CD8-positive, alpha-beta T cell (primary cell): ENCODE measurements at regions of chr5 and their contacts with region 1.

Region 1: GRCh38 chr5:38441453-38442246 is 114.8 kb downstream of the LIFR start:
- DNase-seq: peak; percentile 64 to 87 (median 81)
- ATAC-seq: peak; percentile 96
- H3K4me3 ChIP-seq: no peak overlapping the region
- H3K4me3 Mint-ChIP-seq: no peak overlapping the region
- H3K27ac ChIP-seq: no peak overlapping the region
- H3K27ac Mint-ChIP-seq: no peak overlapping the region
- H3K4me1 ChIP-seq: no peaks in the 10 kb centered on the region
- H3K4me1 Mint-ChIP-seq: peaks cover 2% of the 10 kb centered on the region
- H3K27me3 ChIP-seq: no peaks in the 10 kb centered on the region
- H3K27me3 Mint-ChIP-seq: peaks cover 43% of the 10 kb centered on the region
- CTCF ChIP-seq: peak; percentile 94

Region 2: GRCh38 chr5:38453506-38453905 is 11.9 kb after region 1 on chr5:
- CTCF ChIA-PET with region 1: interaction called, 49 read pairs
- POLR2A ChIA-PET with region 1: no interaction called
- intact Hi-C with region 1: no loop called
- DNase-seq: peak; percentile 6 to 91 (median 44)
- ATAC-seq: peak; percentile 90
- H3K4me3 ChIP-seq: no peak overlapping the region
- H3K4me3 Mint-ChIP-seq: peak overlapping the region; percentile 38
- H3K27ac ChIP-seq: no peak overlapping the region
- H3K27ac Mint-ChIP-seq: peak overlapping the region; percentile 46
- H3K4me1 ChIP-seq: peaks cover 30% of the 10 kb centered on the region
- H3K4me1 Mint-ChIP-seq: peaks cover 45% of the 10 kb centered on the region
- H3K27me3 ChIP-seq: peaks cover 17 to 25% of the 10 kb centered on the region in 2 experiments
- H3K27me3 Mint-ChIP-seq: peaks cover 78% of the 10 kb centered on the region
- CTCF ChIP-seq: no peak

Region 3: DNA sequence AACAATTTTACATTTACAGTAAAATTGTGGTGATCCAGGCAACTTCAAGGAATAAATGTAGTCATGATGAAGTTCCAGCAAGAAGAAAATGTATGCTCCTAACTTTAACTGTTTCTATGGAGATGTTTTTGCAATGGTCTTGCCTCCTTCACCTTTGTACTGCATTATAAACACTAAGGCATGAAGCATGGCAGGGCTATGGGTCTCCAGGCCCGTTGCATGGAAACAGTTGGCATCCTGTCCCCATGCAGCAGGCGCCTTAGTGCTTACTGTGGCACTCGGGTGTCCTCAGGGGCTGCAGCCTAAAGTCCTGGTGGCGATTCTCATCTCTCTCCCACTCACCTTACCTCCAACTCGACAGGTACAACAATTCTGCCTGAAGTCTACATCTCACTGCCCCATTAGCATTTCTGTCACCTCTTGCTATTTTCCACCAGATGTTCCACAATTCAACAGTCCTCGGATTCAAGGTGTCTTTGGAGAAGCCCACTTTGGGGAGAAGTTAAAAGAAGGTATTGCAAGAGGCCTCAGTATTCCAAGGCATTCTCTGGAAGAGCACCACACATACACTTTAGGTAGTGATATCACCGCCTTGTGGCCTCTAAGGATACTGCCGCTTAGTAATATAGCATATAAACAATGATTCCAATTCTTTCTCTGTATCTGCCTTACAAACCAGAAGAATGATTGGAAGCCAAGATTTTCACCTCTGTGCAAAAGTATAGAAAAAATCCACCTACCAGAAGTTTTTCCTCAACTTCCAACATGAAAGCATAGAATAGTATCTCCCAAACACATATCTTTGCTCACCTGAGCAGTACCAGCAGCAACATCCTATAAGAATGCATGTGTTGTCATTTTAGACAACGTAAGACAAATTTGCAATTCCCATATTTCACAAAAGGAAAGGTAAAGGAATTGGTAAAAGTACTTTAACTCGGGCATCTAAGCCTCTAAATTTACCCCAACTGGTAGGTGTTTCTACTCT is 109.7 kb after region 1 on chr5:
- CTCF ChIA-PET with region 1: interaction called, 9 read pairs
- POLR2A ChIA-PET with region 1: no interaction called
- intact Hi-C with region 1: loop called (anchors 1 to 2 kb)
- DNase-seq: peak in 2 of 9 experiments; percentile 8 to 30
- ATAC-seq: no peak
- H3K4me3 ChIP-seq: no peak overlapping the region
- H3K4me3 Mint-ChIP-seq: no peak overlapping the region
- H3K27ac ChIP-seq: no peak overlapping the region
- H3K27ac Mint-ChIP-seq: no peak overlapping the region
- H3K4me1 ChIP-seq: peaks cover 7% of the 10 kb centered on the region
- H3K4me1 Mint-ChIP-seq: peaks cover 6% of the 10 kb centered on the region
- H3K27me3 ChIP-seq: peaks cover 0 to 15% of the 10 kb centered on the region in 2 experiments
- H3K27me3 Mint-ChIP-seq: peaks cover 30% of the 10 kb centered on the region
- CTCF ChIP-seq: peak; percentile 25

Region 4: GRCh38 chr5:38922199-38922598 is 480.5 kb after region 1 on chr5:
- CTCF ChIA-PET with region 1: interaction called, 30 read pairs
- POLR2A ChIA-PET with region 1: no interaction called
- intact Hi-C with region 1: loop called in 1 of 2 experiments (anchors 1 kb)
- DNase-seq: peak in 7 of 9 experiments; percentile 6 to 60 (median 28)
- ATAC-seq: no peak
- H3K4me3 ChIP-seq: no peak overlapping the region
- H3K4me3 Mint-ChIP-seq: no peak overlapping the region
- H3K27ac ChIP-seq: no peak overlapping the region
- H3K27ac Mint-ChIP-seq: no peak overlapping the region
- H3K4me1 ChIP-seq: no peaks in the 10 kb centered on the region
- H3K4me1 Mint-ChIP-seq: no peaks in the 10 kb centered on the region
- H3K27me3 ChIP-seq: no peaks in the 10 kb centered on the region
- H3K27me3 Mint-ChIP-seq: peaks cover 35% of the 10 kb centered on the region
- CTCF ChIP-seq: peak; percentile 48

Region 5: GRCh38 chr5:39570403-39571027 is 1128.9 kb after region 1 on chr5:
- CTCF ChIA-PET with region 1: interaction called, 11 read pairs
- POLR2A ChIA-PET with region 1: no interaction called
- intact Hi-C with region 1: loop called (anchors 2 to 5 kb)
- DNase-seq: peak in 2 of 9 experiments; percentile 30 to 45
- ATAC-seq: peak; percentile 49
- H3K4me3 ChIP-seq: no peak overlapping the region
- H3K4me3 Mint-ChIP-seq: no peak overlapping the region
- H3K27ac ChIP-seq: no peak overlapping the region
- H3K27ac Mint-ChIP-seq: no peak overlapping the region
- H3K4me1 ChIP-seq: no peaks in the 10 kb centered on the region
- H3K4me1 Mint-ChIP-seq: no peaks in the 10 kb centered on the region
- H3K27me3 ChIP-seq: no peaks in the 10 kb centered on the region
- H3K27me3 Mint-ChIP-seq: peaks cover 10% of the 10 kb centered on the region
- CTCF ChIP-seq: peak; percentile 61